ENCODE measurements at regions of chr2 and their contacts with region 1.

Region 1: DNA sequence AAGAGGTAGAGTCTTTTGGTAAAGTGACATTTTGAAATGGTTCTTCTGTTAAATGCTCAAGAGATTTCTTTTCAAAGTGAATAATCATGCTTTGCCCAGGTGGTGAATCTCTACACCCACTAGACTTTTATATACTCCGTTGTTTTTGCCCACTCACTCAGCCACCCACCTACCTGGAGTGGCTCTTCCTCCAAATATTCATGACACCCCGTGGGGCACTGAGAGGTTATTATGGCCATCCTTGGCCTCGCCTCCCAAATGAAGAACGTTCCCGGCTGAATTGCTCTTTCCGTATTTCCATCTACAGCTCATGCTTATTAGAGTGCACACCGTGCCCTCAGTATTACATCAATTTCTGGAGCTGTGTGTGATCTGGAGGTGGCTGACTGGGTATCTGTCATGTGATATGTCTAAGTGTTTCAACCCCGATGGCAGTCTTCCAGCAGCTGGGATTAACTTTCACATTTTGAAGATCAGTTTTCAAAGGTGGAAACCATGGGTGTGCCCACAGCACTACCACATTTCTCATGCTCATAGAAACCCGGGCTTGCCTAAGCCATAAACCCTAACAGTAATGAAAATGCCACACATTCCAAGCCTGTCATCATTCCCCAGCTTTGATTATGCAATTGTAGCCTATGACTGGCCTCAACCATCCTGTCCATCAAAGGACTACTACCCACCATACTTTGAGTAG is 406.6 kb upstream of the MMADHC start:
- DNase-seq: peak; percentile 100
- H3K4me3 ChIP-seq: no peak overlapping the region
- H3K27ac ChIP-seq: peak overlapping the region; percentile 74
- H3K4me1 ChIP-seq: peaks cover 29% of the 10 kb centered on the region
- H3K27me3 ChIP-seq: no peaks in the 10 kb centered on the region
- CTCF ChIP-seq: no peak

Region 2: GRCh38 chr2:149808556-149808955 is 185.6 kb before region 1 on chr2:
- CTCF ChIA-PET with region 1: no interaction called
- dilution Hi-C with region 1: no loop called
- in situ Hi-C with region 1: no loop called
- intact Hi-C with region 1: loop called (anchors 10 kb)
- DNase-seq: no peak
- H3K4me3 ChIP-seq: no peak overlapping the region
- H3K27ac ChIP-seq: no peak overlapping the region
- H3K4me1 ChIP-seq: no peaks in the 10 kb centered on the region
- H3K27me3 ChIP-seq: no peaks in the 10 kb centered on the region
- CTCF ChIP-seq: no peak

Region 3: DNA sequence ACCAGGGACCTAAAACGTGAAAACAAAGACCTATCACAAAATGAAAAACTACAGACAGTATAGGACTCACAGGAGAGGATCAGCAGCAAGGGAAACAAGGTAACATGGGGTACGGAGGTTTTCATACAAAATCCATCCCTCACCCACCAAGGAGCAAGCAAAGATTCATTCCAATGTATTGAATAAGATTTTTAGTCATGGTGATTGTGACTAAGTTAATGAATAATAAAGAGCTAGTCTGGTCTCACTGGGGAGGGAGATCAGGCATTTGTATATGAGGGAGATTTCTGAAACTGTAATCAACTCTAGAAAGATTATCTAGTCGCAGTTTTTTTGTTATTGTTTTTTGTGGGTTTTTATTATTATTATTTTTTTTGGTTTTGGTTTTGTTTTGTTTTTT is 70.2 kb before region 1 on chr2:
- CTCF ChIA-PET with region 1: no interaction called
- dilution Hi-C with region 1: loop called (anchors 5 kb)
- in situ Hi-C with region 1: no loop called
- intact Hi-C with region 1: loop called (anchors 5 kb)
- DNase-seq: peak; percentile 53
- H3K4me3 ChIP-seq: no peak overlapping the region
- H3K27ac ChIP-seq: no peak overlapping the region
- H3K4me1 ChIP-seq: peaks cover 6% of the 10 kb centered on the region
- H3K27me3 ChIP-seq: no peaks in the 10 kb centered on the region
- CTCF ChIP-seq: no peak

Region 4: GRCh38 chr2:150133623-150134022 is 139.4 kb after region 1 on chr2:
- CTCF ChIA-PET with region 1: no interaction called
- dilution Hi-C with region 1: no loop called
- in situ Hi-C with region 1: loop called in 1 of 2 experiments (anchors 5 kb)
- intact Hi-C with region 1: no loop called
- DNase-seq: peak; percentile 98
- H3K4me3 ChIP-seq: no peak overlapping the region
- H3K27ac ChIP-seq: peak overlapping the region; percentile 84
- H3K4me1 ChIP-seq: peaks cover 24% of the 10 kb centered on the region
- H3K27me3 ChIP-seq: no peaks in the 10 kb centered on the region
- CTCF ChIP-seq: no peak

Region 5: GRCh38 chr2:150478200-150478974 is 484.2 kb after region 1 on chr2:
- CTCF ChIA-PET with region 1: no interaction called
- dilution Hi-C with region 1: no loop called
- in situ Hi-C with region 1: no loop called
- intact Hi-C with region 1: loop called (anchors 1 kb)
- DNase-seq: peak; percentile 54
- H3K4me3 ChIP-seq: peak overlapping the region; percentile 3 to 30 (median 21)
- H3K27ac ChIP-seq: peak overlapping the region; percentile 100
- H3K4me1 ChIP-seq: peaks cover 88% of the 10 kb centered on the region
- H3K27me3 ChIP-seq: no peaks in the 10 kb centered on the region
- CTCF ChIP-seq: no peak